GM12878 (cell line): ENCODE measurements at regions of chr2 and their contacts with region 1.

Region 1: DNA sequence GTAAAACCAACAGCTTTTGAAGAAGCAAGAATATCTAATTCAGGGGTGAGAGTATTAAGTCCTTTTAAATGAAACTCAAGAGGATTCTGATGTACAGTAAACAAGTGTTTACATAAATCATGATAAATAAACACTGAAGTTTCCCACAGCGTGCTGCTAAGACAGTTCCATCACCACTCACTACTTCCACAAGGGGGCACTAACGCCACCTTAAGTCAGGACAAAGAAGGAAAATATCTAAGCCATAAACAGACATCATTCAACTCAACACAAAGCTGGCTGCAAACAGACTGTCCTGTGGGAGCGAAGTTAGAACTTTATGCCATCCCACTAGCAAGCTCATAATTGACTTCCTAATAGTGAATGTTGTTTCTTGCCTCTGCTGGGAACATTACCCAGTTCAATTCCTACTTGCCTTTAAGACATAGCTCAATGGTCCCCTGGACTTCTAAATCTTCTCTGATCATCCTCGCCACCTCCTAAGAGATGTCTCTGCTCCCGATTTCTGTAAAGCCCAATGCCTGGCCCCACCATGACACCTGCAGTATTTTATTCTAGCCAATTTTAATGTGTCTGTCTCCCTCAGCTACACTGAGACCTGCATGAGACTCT is 36.5 kb downstream of the MRPL44 start:
- DNase-seq: no peak
- ATAC-seq: peak; percentile 87
- H3K4me3 ChIP-seq: no peak overlapping the region
- H3K27ac ChIP-seq: no peak overlapping the region
- H3K4me1 ChIP-seq: no peaks in the 10 kb centered on the region
- H3K27me3 ChIP-seq: peaks cover 0 to 4% of the 10 kb centered on the region in 2 experiments; a peak in 2 of 4 replicates
- CTCF ChIP-seq: peak; percentile 71 to 81 (median 78)
- EP300 ChIP-seq: no peak
- POLR2A ChIP-seq: no peak
- RAD21 ChIP-seq: peak; percentile 71

Region 2: DNA sequence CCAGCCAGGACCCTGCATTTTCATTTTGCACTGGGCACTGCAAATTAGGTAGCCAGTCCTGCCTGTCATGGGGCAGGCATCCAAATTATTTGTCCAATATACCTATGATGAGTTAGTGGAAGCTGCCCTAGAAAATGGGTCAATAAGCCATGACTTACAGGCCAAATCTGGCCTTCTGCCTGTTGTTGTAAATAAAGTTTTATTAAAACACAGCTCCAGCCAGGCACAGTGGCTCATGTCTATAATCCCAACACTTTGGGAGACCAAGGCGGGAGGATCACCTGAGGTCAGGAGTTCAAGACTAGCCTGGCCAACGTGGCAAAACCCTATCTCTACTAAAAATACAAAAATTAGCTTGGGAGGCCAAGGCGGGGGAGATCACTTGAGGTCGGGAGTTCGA is 164.6 kb before region 1 on chr2:
- CTCF ChIA-PET with region 1: no interaction called
- POLR2A ChIA-PET with region 1: no interaction called
- RAD21 ChIA-PET with region 1: no interaction called
- SMC1A ChIA-PET with region 1: no interaction called
- in situ Hi-C with region 1: no loop called
- intact Hi-C with region 1: no loop called
- DNase-seq: no peak
- ATAC-seq: no peak
- H3K4me3 ChIP-seq: no peak overlapping the region
- H3K27ac ChIP-seq: no peak overlapping the region
- H3K4me1 ChIP-seq: peaks cover 2% of the 10 kb centered on the region; the same call in 1 of the 2 replicates
- H3K27me3 ChIP-seq: no peaks in the 10 kb centered on the region
- CTCF ChIP-seq: no peak
- EP300 ChIP-seq: no peak
- POLR2A ChIP-seq: no peak
- RAD21 ChIP-seq: no peak

Region 3: DNA sequence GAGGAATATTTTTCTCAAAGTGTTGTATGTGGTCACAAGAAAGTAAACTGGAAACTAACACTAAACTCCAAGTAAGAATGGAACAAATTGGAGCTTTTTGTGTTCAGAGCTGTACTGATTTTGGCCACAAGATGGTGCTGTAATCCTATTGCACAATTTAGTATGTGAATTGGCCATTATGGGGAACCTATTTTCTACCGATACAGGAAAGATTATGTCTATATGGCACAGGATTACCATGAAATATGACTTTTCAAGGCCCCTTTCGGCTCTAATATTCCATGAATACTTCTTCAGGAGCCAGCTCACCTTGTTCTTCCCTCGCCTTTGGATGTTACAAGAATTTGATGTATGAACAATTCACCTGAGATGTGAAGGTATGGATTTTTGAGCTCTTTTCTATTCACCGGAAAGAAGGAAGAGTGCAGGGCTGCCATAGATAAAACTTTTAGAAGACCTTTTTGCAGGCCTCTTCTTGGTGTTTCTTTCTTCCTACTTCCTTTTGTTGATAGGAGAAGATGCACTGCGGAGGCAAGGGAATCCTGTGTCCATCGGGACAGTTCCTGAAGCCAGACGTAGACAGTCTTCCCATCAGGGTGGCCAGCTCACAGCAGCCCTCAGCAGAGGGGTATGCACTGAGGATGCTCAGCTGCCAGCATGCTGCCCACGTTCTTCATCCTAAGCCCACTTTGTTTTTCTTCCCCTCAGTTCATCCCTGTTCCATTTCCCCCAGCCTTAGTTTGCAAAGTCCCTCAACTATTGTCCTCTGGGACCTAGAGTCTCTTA is 23.2 kb before region 1 on chr2:
- CTCF ChIA-PET with region 1: interaction called, 149 read pairs
- POLR2A ChIA-PET with region 1: no interaction called
- RAD21 ChIA-PET with region 1: interaction called, 14 read pairs
- SMC1A ChIA-PET with region 1: interaction called, 31 read pairs
- in situ Hi-C with region 1: no loop called
- intact Hi-C with region 1: no loop called
- DNase-seq: no peak
- ATAC-seq: peak; percentile 87
- H3K4me3 ChIP-seq: no peak overlapping the region
- H3K27ac ChIP-seq: no peak overlapping the region
- H3K4me1 ChIP-seq: no peaks in the 10 kb centered on the region
- H3K27me3 ChIP-seq: no peaks in the 10 kb centered on the region
- CTCF ChIP-seq: peak; percentile 73 to 91 (median 85); a peak in 5 of 6 replicates
- EP300 ChIP-seq: no peak
- POLR2A ChIP-seq: no peak
- RAD21 ChIP-seq: peak; percentile 84

Region 4: GRCh38 chr2:224008702-224009261 is 15.1 kb after region 1 on chr2:
- CTCF ChIA-PET with region 1: interaction called, 30 read pairs
- POLR2A ChIA-PET with region 1: no interaction called
- RAD21 ChIA-PET with region 1: no interaction called
- SMC1A ChIA-PET with region 1: interaction called, 6 read pairs
- in situ Hi-C with region 1: no loop called
- intact Hi-C with region 1: no loop called
- DNase-seq: no peak
- ATAC-seq: no peak
- H3K4me3 ChIP-seq: no peak overlapping the region
- H3K27ac ChIP-seq: no peak overlapping the region
- H3K4me1 ChIP-seq: no peaks in the 10 kb centered on the region
- H3K27me3 ChIP-seq: peaks cover 0 to 4% of the 10 kb centered on the region in 2 experiments; a peak in 3 of 4 replicates
- CTCF ChIP-seq: no peak
- EP300 ChIP-seq: no peak
- POLR2A ChIP-seq: no peak
- RAD21 ChIP-seq: no peak

Region 5: DNA sequence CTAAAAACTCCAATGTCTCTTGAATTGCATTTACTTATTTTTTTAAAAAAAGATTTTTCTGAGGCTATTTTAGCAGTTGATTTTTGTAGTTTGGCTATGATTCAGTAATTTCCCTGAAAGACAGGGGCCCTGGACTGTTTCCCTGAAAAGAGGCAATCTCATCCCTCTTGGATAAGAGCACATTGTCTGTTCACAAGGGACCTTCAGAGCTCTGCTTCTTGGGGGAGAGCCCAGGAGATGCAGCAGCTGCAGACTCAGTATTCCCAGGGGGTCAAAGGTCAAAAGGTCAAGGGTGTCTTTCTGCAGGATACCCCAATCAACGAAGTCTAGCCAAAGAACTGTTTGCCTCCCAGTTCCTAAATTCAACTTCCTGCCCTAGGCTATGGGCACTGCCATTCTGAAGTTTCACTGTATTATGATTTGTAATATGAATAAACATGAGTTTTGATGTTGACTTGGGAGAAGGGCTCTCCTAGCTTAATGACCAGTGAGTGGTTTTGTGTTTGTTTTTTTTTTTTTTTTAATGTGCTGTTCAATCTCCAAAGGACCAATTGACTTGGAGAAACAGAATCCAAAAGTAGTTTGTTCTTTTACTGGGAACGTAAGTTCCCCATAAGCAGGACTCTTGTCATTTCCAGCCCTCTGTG is 202.3 kb after region 1 on chr2:
- CTCF ChIA-PET with region 1: no interaction called
- POLR2A ChIA-PET with region 1: no interaction called
- RAD21 ChIA-PET with region 1: no interaction called
- SMC1A ChIA-PET with region 1: no interaction called
- in situ Hi-C with region 1: no loop called
- intact Hi-C with region 1: no loop called
- DNase-seq: no peak
- ATAC-seq: no peak
- H3K4me3 ChIP-seq: no peak overlapping the region
- H3K27ac ChIP-seq: no peak overlapping the region
- H3K4me1 ChIP-seq: no peaks in the 10 kb centered on the region
- H3K27me3 ChIP-seq: no peaks in the 10 kb centered on the region
- CTCF ChIP-seq: no peak
- EP300 ChIP-seq: no peak
- POLR2A ChIP-seq: no peak
- RAD21 ChIP-seq: no peak

Region 6: GRCh38 chr2:224278531-224278930 is 284.8 kb after region 1 on chr2:
- CTCF ChIA-PET with region 1: interaction called, 188 read pairs
- POLR2A ChIA-PET with region 1: no interaction called
- RAD21 ChIA-PET with region 1: interaction called, 93 read pairs
- SMC1A ChIA-PET with region 1: interaction called, 108 read pairs
- in situ Hi-C with region 1: no loop called
- intact Hi-C with region 1: no loop called
- DNase-seq: no peak
- ATAC-seq: no peak
- H3K4me3 ChIP-seq: no peak overlapping the region
- H3K27ac ChIP-seq: no peak overlapping the region
- H3K4me1 ChIP-seq: no peaks in the 10 kb centered on the region
- H3K27me3 ChIP-seq: no peaks in the 10 kb centered on the region; a peak in 3 of 4 replicates
- CTCF ChIP-seq: no peak
- EP300 ChIP-seq: no peak
- POLR2A ChIP-seq: no peak
- RAD21 ChIP-seq: no peak

Region 7: DNA sequence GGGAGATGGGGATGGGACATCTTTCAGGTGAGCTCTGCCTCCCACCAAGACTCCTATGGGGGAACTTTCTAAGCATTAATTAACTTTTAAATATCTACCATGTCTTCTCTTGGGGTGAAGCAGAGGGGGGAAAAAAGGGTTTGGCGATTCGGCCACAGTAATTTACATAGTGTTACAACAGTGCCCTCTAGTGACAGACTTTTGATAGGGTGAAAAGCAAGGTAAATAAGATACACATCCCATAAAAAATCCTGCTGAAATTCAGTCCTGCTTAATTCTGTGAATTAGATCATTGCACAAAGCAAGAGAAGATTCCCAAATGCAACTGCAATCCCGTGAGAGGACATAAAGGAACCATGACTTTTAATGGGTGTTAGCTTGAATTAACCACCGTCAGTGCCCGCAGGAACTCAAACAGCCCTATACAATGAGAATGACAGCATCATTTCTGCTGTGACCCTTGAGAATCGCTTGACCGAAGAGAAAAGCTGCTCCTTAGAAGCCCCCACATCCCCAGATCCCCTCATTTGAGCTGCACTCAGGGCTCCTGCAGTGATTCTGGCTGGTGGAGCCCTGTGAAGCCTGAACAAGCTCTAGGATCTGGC is 375.4 kb after region 1 on chr2:
- CTCF ChIA-PET with region 1: interaction called, 14 read pairs
- POLR2A ChIA-PET with region 1: no interaction called
- RAD21 ChIA-PET with region 1: interaction called, 3 read pairs
- SMC1A ChIA-PET with region 1: no interaction called
- in situ Hi-C with region 1: no loop called
- intact Hi-C with region 1: no loop called
- DNase-seq: no peak
- ATAC-seq: peak; percentile 78
- H3K4me3 ChIP-seq: no peak overlapping the region
- H3K27ac ChIP-seq: no peak overlapping the region
- H3K4me1 ChIP-seq: no peaks in the 10 kb centered on the region
- H3K27me3 ChIP-seq: no peaks in the 10 kb centered on the region
- CTCF ChIP-seq: peak; percentile 39 to 61 (median 48); a peak in 5 of 6 replicates
- EP300 ChIP-seq: no peak
- POLR2A ChIP-seq: no peak
- RAD21 ChIP-seq: peak; percentile 39

Region 8: DNA sequence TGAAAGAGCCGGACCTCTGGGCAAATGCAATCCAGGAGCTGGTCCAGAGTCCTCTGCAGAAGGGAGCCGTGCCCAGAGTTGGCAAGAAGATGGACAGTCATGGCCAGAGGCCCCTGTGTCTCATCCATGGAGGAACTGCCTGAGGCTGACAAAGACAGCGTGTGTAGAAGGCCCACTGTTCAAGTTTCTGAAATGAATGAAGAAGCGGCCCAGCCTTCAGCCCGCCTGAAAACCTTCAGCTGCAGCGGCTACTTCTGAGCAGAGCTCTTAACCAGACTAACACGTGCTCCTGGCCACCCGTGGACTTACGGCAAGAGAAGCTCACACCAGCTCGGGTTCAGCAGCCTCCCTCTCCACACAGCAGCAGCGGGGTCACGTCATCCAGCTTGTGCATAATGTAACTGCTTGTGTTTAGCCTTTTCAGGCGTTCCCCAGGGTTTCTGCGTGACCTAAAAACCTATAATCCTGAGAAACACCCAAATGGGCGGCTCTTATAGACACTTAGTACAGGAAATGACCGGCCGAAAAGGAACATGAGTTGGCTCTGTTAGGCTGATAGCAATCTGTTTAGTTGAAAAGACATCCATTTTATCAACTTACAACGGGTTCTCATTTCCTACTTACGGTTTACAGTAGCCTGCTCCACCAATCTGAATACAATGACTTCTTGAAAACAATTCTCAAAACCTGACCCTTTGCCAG is 408.1 kb after region 1 on chr2 and contains the start of gene FAM124B:
- CTCF ChIA-PET with region 1: no interaction called
- POLR2A ChIA-PET with region 1: no interaction called
- RAD21 ChIA-PET with region 1: no interaction called
- SMC1A ChIA-PET with region 1: no interaction called
- in situ Hi-C with region 1: no loop called
- intact Hi-C with region 1: no loop called
- DNase-seq: no peak
- ATAC-seq: peak; percentile 43
- H3K4me3 ChIP-seq: no peak within 1 kb of the TSS
- H3K27ac ChIP-seq: no peak within 1 kb of the TSS
- H3K4me1 ChIP-seq: peaks cover 3% of the 10 kb centered on the region; the same call in 1 of the 2 replicates
- H3K27me3 ChIP-seq: peaks cover 0 to 7% of the 10 kb centered on the region in 2 experiments; a peak in 1 of 4 replicates
- CTCF ChIP-seq: no peak
- EP300 ChIP-seq: no peak
- POLR2A ChIP-seq: no peak
- RAD21 ChIP-seq: no peak
- polyA plus RNA-seq, gene FAM124B: not detected